ENCODE measurements at regions of chr17 and their contacts with region 1.

Region 1: DNA sequence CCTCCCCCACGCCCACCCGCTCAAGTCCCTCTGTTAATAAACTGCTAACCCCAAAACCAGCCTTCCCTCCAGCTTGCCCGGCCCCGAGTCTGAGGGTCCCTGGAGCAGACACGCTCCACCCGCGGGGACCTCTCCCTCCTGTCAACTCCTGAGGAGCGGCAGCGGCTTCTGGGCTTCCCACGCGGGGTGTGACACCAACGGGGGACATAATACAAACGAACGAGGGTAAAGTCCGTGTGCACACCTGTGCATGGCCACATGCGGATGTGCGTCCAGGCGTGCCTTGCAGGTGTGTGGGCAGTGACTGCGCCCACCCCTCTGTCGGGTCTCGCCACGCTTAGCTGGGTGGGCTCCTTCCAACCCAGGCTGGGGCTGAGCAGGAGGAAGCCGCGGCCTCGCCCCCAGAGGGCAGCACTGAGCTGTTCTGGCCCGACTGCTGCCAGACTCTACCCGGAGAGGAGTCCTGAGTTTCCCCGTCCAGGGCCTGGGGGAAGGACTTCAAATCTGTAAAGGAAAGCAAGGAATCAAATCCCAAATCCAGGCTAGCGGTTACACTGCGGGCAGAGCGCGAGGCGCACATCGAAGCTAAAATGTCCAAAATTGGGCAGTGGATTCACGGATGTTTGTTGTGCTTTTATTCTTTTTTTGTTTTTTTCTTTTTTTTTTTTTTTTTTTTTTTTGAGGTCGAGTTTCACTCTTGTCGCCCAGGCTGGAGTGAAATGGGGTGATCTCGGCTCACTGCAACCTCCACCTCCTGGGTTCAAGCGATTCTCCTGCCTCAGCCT is 24.2 kb upstream of the KRT17 start:
- DNase-seq: no peak
- H3K4me3 ChIP-seq: peak overlapping the region; percentile 50
- CTCF ChIP-seq: peak; percentile 95

Region 2: DNA sequence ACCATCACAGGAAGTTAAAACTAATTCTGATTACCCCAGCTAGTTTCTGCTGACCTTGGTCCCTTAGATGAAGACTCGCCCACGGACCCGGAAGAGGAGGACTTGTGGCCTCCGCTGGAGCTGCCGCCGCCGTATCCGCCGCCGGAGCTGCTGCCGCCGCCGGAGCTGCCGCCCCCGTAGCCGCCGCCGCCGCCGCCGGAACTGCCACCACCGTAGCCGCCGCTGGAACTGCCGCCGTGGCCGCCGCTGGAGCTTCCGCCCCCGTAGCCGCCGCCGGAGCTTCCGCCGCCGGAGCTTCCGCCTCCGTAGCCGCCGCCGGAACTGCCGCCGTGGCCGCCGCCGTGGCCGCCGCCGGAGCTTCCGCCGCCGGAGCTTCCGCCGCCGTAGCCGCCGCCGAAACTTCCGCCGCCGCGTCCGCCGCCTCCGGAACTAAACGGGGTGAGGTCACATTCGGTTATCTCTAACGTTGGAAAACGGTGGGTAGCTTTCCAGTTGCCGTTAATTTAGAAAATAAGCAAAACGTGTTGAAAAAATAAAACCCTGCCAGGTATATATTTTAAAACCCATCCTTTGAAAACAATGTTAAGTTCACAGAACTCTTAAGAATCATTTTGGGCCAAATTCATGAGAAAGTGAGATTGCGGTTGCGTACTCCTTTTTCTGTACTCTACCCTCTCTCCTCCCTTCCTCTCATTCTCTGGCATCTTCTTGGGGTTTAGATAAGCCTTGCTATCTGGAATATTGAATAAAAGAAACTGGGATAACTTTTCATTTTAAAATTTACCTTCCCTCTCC is 829.7 kb before region 1 on chr17:
- CTCF ChIA-PET with region 1: interaction called, 26 read pairs
- POLR2A ChIA-PET with region 1: no interaction called
- DNase-seq: no peak
- H3K4me3 ChIP-seq: peak overlapping the region; percentile 71
- CTCF ChIP-seq: no peak

Region 3: DNA sequence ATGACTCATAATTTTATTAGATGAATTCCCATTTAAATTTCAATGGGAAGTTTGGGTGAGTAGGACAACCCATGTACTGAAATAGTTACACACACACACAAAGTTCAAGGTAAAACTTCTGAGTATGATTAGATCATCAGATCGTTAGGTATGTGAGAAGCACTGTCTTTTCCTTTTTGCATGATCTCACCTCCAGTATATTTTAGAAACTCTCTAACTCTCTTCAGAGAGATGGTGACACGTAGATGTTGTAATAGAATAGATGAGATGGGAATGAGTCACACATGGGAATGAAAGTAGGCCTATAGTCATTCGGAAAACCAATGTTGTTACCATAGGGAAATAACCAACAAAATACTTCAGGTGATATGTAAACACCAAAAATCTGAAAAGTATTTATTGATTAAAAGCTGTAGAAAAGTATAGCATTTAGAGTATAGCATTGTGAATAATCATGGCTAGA is 733.4 kb before region 1 on chr17:
- CTCF ChIA-PET with region 1: interaction called, 10 read pairs
- POLR2A ChIA-PET with region 1: no interaction called
- DNase-seq: peak; percentile 94
- H3K4me3 ChIP-seq: no peak overlapping the region
- CTCF ChIP-seq: no peak

Region 4: GRCh38 chr17:41496820-41497408 is 151.7 kb before region 1 on chr17:
- CTCF ChIA-PET with region 1: interaction called, 12 read pairs
- POLR2A ChIA-PET with region 1: no interaction called
- DNase-seq: peak; percentile 37
- H3K4me3 ChIP-seq: no peak overlapping the region
- CTCF ChIP-seq: peak; percentile 96

Region 5: DNA sequence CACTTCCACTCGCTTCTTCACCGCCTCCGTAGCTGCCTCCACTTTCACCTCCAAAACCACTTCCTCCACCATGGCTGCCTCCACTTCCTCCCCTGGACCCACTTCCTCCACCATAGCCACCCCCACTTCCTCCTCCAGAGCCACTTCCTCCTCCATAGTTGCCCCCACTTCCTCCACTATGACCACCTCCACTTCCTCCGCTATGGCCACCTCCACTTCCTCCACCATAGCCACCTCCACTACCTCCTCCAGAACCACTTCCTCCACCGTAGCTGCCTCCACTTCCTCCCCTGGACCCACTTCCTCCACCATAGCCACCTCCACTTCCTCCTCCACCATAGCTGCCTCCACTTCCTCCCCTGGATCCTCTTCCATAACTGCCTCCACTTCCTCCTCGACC is 81.3 kb before region 1 on chr17:
- CTCF ChIA-PET with region 1: interaction called, 52 read pairs
- POLR2A ChIA-PET with region 1: no interaction called
- DNase-seq: no peak
- H3K4me3 ChIP-seq: no peak overlapping the region
- CTCF ChIP-seq: no peak

Region 6: DNA sequence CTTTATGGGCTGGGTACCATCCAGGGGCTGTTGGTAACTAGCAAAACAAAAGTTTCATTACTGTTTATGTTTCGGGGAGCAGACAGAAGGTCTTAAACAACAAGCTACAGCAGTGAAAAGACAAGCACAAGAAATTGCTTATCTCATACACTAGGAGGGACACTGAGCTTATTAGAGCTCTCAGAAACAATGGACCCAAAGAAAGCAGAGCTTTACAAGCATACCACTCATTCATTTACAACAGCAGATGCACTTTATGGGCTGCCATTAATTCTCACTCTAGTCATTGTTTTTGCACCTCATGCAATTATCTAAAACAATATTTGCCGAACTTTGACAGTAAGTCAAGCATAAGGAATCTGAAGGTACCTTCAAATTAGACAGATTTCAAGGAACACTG is 46.1 kb before region 1 on chr17:
- CTCF ChIA-PET with region 1: interaction called, 32 read pairs
- POLR2A ChIA-PET with region 1: no interaction called
- DNase-seq: no peak
- H3K4me3 ChIP-seq: no peak overlapping the region
- CTCF ChIP-seq: no peak

Region 7: DNA sequence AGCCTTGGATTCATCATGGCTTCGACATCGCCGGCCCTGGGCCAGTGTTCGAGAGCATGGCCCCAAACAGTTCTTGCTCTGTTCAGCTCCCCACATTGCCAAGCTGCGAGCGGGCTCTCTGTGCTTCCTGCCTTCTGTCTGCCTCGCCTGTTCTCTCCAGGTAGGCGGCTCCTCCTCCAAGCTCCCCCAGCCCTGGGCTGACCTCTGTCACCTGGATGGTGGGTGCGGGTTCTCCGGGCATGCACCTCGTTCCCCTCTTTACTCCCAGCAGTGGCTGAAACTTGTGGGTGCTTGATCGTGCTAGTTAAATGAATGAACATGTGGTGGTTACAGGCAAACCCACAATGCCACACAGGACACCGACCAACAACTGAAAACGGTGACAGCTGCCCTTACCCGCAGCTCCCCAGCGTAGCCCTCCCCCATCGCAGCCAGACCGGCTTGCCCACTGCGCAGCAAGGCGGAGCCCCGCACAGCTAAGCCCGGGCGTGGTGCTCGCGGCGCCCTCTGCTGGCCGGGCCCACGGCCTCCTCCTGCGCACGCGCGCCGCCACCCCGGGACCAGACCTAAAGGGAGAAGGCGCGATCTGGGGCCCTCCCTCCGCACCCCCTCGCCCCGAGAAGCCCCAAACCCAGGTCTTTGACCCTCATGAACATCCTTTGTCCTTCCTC is 17.1 kb after region 1 on chr17:
- CTCF ChIA-PET with region 1: interaction called, 536 read pairs
- POLR2A ChIA-PET with region 1: no interaction called
- DNase-seq: no peak
- H3K4me3 ChIP-seq: peak overlapping the region; percentile 55
- CTCF ChIP-seq: peak; percentile 90